Activated CD4-positive, alpha-beta memory T cell treated with anti-CD3 and anti-CD28 coated beads for 36 hours (primary cell): ENCODE measurements at regions of chr16 and their contacts with region 1.

Region 1: GRCh38 chr16:8878521-8878911 is 3.6 kb upstream of the LITAFD start:
- DNase-seq: no peak
- H3K4me3 Mint-ChIP-seq: no peak overlapping the region
- H3K27ac Mint-ChIP-seq: no peak overlapping the region
- H3K4me1 Mint-ChIP-seq: peaks cover 2% of the 10 kb centered on the region
- H3K27me3 Mint-ChIP-seq: no peaks in the 10 kb centered on the region

Region 2: GRCh38 chr16:8567750-8568617 is 310.5 kb before region 1 on chr16:
- CTCF ChIA-PET with region 1: interaction called, 21 read pairs
- POLR2A ChIA-PET with region 1: no interaction called
- intact Hi-C with region 1: loop called (anchors 1 kb)
- DNase-seq: peak; percentile 86
- H3K4me3 Mint-ChIP-seq: no peak overlapping the region
- H3K27ac Mint-ChIP-seq: no peak overlapping the region
- H3K4me1 Mint-ChIP-seq: peaks cover 5% of the 10 kb centered on the region
- H3K27me3 Mint-ChIP-seq: peaks cover 8% of the 10 kb centered on the region

Region 3: GRCh38 chr16:8660841-8661301 is 217.6 kb before region 1 on chr16:
- CTCF ChIA-PET with region 1: interaction called, 30 read pairs
- POLR2A ChIA-PET with region 1: no interaction called
- intact Hi-C with region 1: loop called (anchors 2 kb)
- DNase-seq: peak; percentile 76
- H3K4me3 Mint-ChIP-seq: no peak overlapping the region
- H3K27ac Mint-ChIP-seq: no peak overlapping the region
- H3K4me1 Mint-ChIP-seq: peaks cover 4% of the 10 kb centered on the region
- H3K27me3 Mint-ChIP-seq: no peaks in the 10 kb centered on the region

Region 4: DNA sequence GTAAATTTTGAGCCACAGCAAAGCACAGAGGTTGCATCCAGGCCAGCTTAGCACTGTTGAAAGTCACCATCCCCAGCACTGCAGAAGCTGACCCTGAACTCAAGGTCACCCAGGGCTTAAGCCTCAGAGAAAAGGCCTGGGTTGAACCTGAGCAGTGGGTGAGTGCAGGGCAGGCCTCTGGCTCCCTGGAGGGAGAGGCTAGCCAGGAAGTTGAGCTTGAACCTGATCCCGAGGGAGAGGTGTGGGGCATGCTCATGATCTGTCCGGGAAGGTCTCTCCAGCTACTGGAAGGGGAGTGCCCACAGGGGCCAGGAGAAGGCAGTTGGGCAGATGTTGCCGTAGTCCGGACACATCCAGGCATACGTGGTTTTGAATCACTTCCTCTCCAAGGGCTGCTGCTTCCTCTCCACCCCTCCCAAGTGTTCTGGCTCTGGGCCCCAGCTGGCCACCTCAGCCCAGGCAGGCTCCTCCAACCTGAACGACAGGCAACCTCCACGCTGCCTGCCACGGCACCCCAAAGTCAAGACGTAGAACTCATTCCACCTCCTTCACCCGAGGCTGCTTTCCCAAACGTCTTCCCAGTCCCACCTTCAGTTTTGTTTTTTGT is 28.1 kb before region 1 on chr16:
- CTCF ChIA-PET with region 1: interaction called, 20 read pairs
- POLR2A ChIA-PET with region 1: no interaction called
- intact Hi-C with region 1: no loop called
- DNase-seq: peak; percentile 31
- H3K4me3 Mint-ChIP-seq: no peak overlapping the region
- H3K27ac Mint-ChIP-seq: peak overlapping the region; percentile 83
- H3K4me1 Mint-ChIP-seq: peaks cover 36% of the 10 kb centered on the region
- H3K27me3 Mint-ChIP-seq: no peaks in the 10 kb centered on the region

Region 5: GRCh38 chr16:9008601-9009260 is 130.2 kb after region 1 on chr16:
- CTCF ChIA-PET with region 1: interaction called, 16 read pairs
- POLR2A ChIA-PET with region 1: no interaction called
- intact Hi-C with region 1: no loop called
- DNase-seq: peak; percentile 78
- H3K4me3 Mint-ChIP-seq: no peak overlapping the region
- H3K27ac Mint-ChIP-seq: no peak overlapping the region
- H3K4me1 Mint-ChIP-seq: peaks cover 4% of the 10 kb centered on the region
- H3K27me3 Mint-ChIP-seq: peaks cover 17% of the 10 kb centered on the region